ENCODE measurements at regions of chr22 and their contacts with region 1.

Region 1: DNA sequence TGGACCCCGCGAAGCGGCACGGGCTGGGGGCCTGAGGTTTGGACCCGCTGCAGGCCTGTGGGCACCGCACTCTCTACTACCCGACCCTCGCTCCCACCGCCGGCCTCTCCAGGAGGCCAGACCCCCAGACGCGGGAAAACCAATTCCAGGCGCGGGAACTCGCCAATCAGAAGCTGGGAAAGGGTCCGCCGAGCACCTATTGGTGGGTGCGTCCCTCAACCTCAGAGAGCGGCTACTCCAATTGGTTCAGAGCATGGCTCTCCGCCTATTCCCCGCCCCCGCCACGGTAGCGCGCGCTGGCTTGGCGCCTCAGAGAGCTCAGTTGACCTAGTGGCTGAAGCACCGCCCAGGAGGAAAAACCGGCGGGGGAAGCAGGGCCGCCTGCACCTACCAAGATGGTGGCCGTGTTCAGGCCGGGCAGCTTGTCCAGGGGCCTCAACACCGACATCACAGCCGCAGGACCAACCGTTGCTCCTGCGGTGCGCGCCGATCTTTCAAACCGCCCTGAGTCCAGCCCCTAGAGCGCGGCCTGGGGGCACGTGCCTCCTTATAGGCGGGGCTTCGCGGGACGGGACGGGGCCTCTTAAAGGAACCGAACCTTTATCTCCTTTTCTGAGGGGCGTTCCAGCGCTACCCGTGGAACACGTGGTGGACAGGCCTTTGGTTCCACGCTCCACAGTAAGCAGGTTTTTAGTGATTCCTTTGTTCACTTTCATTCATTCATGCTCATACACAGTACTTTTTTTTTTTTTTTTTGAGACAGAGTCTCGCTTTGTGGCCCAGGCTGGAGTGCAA is at the start of gene CENPM:
- DNase-seq: peak; percentile 90 to 97 (median 93)
- H3K4me3 ChIP-seq: peak within 1 kb of the TSS; percentile 55 to 78 (median 67)
- H3K27ac ChIP-seq: peak within 1 kb of the TSS in 1 of 5 donors; percentile 71
- H3K4me1 ChIP-seq: peaks cover 5 to 8% of the 10 kb centered on the region in 2 donors
- H3K27me3 ChIP-seq: no peaks in the 10 kb centered on the region
- CTCF ChIP-seq: peak in 1 of 6 experiments; percentile 8
- POLR2A ChIP-seq: no peak
- total RNA-seq, gene CENPM: 0.88 to 9.2 (median 1.7) TPM in 8 of 9 donors, not detected in the other

Region 2: GRCh38 chr22:41543854-41544670 is 402.8 kb before region 1 on chr22 and contains the start of gene POLR3H:
- intact Hi-C with region 1: no loop called
- DNase-seq: peak; percentile 98 to 100 (median 99)
- H3K4me3 ChIP-seq: peak within 1 kb of the TSS; percentile 34 to 68 (median 59)
- H3K27ac ChIP-seq: peak within 1 kb of the TSS; percentile 81 to 92 (median 91)
- H3K4me1 ChIP-seq: peaks cover 24 to 46% of the 10 kb centered on the region in 2 donors
- H3K27me3 ChIP-seq: no peaks in the 10 kb centered on the region
- CTCF ChIP-seq: peak; percentile 21 to 57 (median 48)
- POLR2A ChIP-seq: peak; percentile 15 to 64
- total RNA-seq, gene POLR3H: 18.7 to 92.6 (median 37.9) TPM

Region 3: DNA sequence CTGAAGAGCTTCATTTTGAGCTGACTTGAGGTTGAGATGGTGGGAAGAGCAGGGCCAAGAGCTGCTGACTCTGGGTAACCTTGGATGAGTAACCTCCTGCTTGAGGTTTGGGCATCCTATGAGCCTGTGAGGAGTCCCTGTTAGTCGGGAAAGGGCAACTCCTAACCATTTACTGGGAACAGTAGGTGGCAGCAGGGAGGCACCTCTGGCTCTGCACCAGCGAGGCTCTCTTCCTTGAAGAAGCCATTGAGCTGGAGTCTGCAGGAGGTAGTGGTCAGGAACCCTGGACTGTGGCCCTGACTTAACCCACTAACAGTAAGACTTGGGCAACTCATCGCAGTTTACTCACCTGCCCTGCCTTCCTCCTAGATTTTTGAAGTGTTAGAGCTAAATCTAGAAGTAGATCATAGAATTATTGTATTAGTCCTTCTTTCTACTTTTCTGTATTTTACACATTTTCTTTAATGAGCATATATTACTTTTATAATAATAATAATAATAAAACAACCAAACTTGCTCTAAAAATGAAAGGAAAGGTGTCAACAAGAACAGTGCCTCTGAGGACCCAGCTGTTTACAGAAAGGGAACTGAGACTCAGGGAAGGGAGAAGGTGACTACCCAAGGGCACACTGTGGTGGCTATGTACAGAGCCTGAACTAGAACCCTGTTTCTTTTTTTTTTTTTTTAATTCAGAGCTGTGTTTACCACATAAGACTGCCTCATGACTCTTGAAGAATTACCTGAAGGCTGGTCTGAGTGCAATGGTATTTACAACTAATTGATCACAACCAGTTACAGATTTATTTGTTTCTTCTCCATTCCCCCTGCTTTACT is 200.0 kb before region 1 on chr22:
- intact Hi-C with region 1: loop called in 1 of 2 experiments (anchors 10 kb)
- DNase-seq: peak; percentile 77 to 91 (median 83)
- H3K4me3 ChIP-seq: no peak overlapping the region
- H3K27ac ChIP-seq: no peak overlapping the region
- H3K4me1 ChIP-seq: peaks cover 0 to 6% of the 10 kb centered on the region in 2 donors
- H3K27me3 ChIP-seq: no peaks in the 10 kb centered on the region
- CTCF ChIP-seq: peak; percentile 45 to 79 (median 77)
- POLR2A ChIP-seq: no peak

Region 4: GRCh38 chr22:41822317-41823060 is 124.3 kb before region 1 on chr22:
- intact Hi-C with region 1: loop called (anchors 5 kb)
- DNase-seq: peak in 1 of 7 donors; percentile 30
- H3K4me3 ChIP-seq: no peak overlapping the region
- H3K27ac ChIP-seq: peak overlapping the region in 3 of 5 donors; percentile 41 to 95 (median 70)
- H3K4me1 ChIP-seq: peaks cover 34 to 62% of the 10 kb centered on the region in 2 donors
- H3K27me3 ChIP-seq: no peaks in the 10 kb centered on the region
- CTCF ChIP-seq: peak; percentile 21 to 74 (median 62)
- POLR2A ChIP-seq: no peak

Region 5: DNA sequence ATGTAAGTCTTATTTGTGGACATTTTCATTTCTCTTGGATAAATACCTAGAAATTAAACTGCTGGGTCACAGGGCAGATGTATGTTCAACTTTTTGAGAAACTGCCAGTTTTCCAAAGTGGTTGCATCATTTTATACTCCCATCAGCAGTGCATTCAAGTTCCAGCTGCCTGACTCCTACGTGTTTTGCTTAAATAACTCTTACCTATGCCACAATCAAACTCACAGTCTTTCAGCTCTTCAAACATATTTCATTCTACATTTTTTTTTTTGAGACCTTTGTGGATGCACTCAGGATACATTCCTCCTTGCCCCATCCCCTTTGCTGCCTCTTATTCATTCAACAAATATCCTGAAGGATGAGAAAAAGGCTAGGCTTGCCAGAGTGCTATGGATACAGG is 314.5 kb after region 1 on chr22:
- intact Hi-C with region 1: no loop called
- DNase-seq: no peak
- H3K4me3 ChIP-seq: no peak overlapping the region
- H3K27ac ChIP-seq: no peak overlapping the region
- H3K4me1 ChIP-seq: peaks cover 0 to 43% of the 10 kb centered on the region in 2 donors
- H3K27me3 ChIP-seq: no peaks in the 10 kb centered on the region
- CTCF ChIP-seq: no peak
- POLR2A ChIP-seq: no peak